B cell (primary cell): ENCODE measurements at regions of chr1 and their contacts with region 1.

Region 1: GRCh38 chr1:84143796-84144565 is at the start of gene PRKACB:
- DNase-seq: peak; percentile 65
- ATAC-seq: peak; percentile 86
- H3K4me3 ChIP-seq: peak within 1 kb of the TSS; percentile 46 to 85 (median 63)
- H3K4me3 Mint-ChIP-seq: peak within 1 kb of the TSS; percentile 91
- H3K27ac ChIP-seq: peak within 1 kb of the TSS; percentile 74 to 92
- H3K27ac Mint-ChIP-seq: peak within 1 kb of the TSS; percentile 95
- H3K4me1 ChIP-seq: peaks cover 2 to 38% of the 10 kb centered on the region in 2 donors
- H3K4me1 Mint-ChIP-seq: peaks cover 42% of the 10 kb centered on the region
- H3K27me3 ChIP-seq: no peaks in the 10 kb centered on the region
- H3K27me3 Mint-ChIP-seq: no peaks in the 10 kb centered on the region
- CTCF ChIP-seq: no peak
- total RNA-seq, gene PRKACB: 53.9 and 54.9 TPM in 2 replicates

Region 2: DNA sequence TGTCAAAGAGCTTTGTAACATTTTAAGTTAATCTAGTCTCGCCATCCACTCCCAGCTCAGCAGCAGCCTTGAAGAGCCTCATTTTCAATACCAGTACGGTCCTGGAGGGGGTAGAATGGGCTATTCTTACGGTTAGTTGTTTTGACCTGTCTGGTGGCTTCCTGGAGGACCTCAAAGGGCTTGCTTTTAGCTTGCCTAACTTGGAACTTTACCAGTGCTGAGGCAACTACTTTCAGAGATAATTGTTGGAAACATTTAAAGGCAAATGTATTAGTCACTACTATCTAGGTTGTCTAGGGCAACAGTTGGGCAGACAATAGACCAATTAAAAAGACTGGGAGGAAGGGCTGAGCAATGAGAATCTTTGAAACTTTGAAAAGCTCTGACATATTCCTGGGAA is 201.1 kb before region 1 on chr1:
- CTCF ChIA-PET with region 1: no interaction called
- POLR2A ChIA-PET with region 1: no interaction called
- intact Hi-C with region 1: no loop called
- DNase-seq: no peak
- ATAC-seq: no peak
- H3K4me3 ChIP-seq: no peak overlapping the region
- H3K4me3 Mint-ChIP-seq: no peak overlapping the region
- H3K27ac ChIP-seq: no peak overlapping the region
- H3K27ac Mint-ChIP-seq: no peak overlapping the region
- H3K4me1 ChIP-seq: no peaks in the 10 kb centered on the region
- H3K4me1 Mint-ChIP-seq: no peaks in the 10 kb centered on the region
- H3K27me3 ChIP-seq: no peaks in the 10 kb centered on the region
- H3K27me3 Mint-ChIP-seq: peaks cover 3% of the 10 kb centered on the region
- CTCF ChIP-seq: no peak

Region 3: DNA sequence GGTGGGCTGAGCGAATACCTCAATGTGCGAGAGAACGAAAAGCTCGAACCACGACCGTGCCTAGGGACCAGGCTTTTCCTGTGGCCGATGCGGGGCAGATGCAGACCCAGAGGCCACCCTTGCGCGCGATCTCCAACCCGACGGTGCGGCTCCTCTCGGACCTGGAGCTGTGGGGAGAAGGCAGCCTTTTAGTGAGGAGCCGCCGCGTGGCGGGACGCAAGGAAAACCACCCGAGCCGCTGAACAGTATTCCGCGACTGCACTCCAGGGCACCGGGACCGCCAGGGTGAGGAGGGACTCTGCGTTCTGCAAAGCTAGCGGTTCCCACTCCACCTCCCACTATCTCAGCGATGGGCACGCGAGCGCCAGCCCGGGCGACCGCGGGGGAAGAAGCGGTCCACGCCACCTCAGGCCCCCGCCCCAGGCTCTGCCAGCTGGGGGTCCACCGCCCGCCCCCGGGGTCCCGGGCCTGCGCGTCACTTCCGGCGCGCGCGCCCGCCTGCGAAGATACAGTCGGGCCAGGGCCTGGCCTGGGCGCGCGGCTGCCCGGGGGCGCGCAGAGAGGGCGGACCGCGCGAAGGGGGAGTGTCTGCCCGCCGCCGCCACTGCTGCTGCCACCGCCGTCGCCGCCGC is 66.4 kb before region 1 on chr1:
- CTCF ChIA-PET with region 1: interaction called, 3 read pairs
- POLR2A ChIA-PET with region 1: no interaction called
- intact Hi-C with region 1: loop called (anchors 5 kb)
- DNase-seq: peak; percentile 85
- ATAC-seq: peak; percentile 93
- H3K4me3 ChIP-seq: peak overlapping the region; percentile 41 to 86 (median 68)
- H3K4me3 Mint-ChIP-seq: peak overlapping the region; percentile 84
- H3K27ac ChIP-seq: peak overlapping the region; percentile 46 to 70
- H3K27ac Mint-ChIP-seq: peak overlapping the region; percentile 67
- H3K4me1 ChIP-seq: peaks cover 7 to 12% of the 10 kb centered on the region in 2 donors
- H3K4me1 Mint-ChIP-seq: peaks cover 13% of the 10 kb centered on the region
- H3K27me3 ChIP-seq: no peaks in the 10 kb centered on the region
- H3K27me3 Mint-ChIP-seq: no peaks in the 10 kb centered on the region
- CTCF ChIP-seq: no peak

Region 4: GRCh38 chr1:84181350-84182005 is 37.5 kb after region 1 on chr1:
- CTCF ChIA-PET with region 1: interaction called, 6 read pairs
- POLR2A ChIA-PET with region 1: no interaction called
- intact Hi-C with region 1: loop called (anchors 5 kb)
- DNase-seq: no peak
- ATAC-seq: no peak
- H3K4me3 ChIP-seq: no peak overlapping the region
- H3K4me3 Mint-ChIP-seq: no peak overlapping the region
- H3K27ac ChIP-seq: no peak overlapping the region
- H3K27ac Mint-ChIP-seq: no peak overlapping the region
- H3K4me1 ChIP-seq: no peaks in the 10 kb centered on the region
- H3K4me1 Mint-ChIP-seq: peaks cover 3% of the 10 kb centered on the region
- H3K27me3 ChIP-seq: no peaks in the 10 kb centered on the region
- H3K27me3 Mint-ChIP-seq: no peaks in the 10 kb centered on the region
- CTCF ChIP-seq: no peak

Region 5: GRCh38 chr1:84433258-84434080 is 289.5 kb after region 1 on chr1:
- CTCF ChIA-PET with region 1: interaction called, 285 read pairs
- POLR2A ChIA-PET with region 1: interaction called, 4 read pairs
- intact Hi-C with region 1: loop called (anchors 1 kb)
- DNase-seq: peak; percentile 78
- ATAC-seq: peak; percentile 34
- H3K4me3 ChIP-seq: peak overlapping the region in 4 of 5 experiments; percentile 19 to 43 (median 32)
- H3K4me3 Mint-ChIP-seq: peak overlapping the region; percentile 79
- H3K27ac ChIP-seq: peak overlapping the region in 1 of 2 donors; percentile 55
- H3K27ac Mint-ChIP-seq: peak overlapping the region; percentile 20
- H3K4me1 ChIP-seq: peaks cover 40 to 43% of the 10 kb centered on the region in 2 donors
- H3K4me1 Mint-ChIP-seq: peaks cover 9% of the 10 kb centered on the region
- H3K27me3 ChIP-seq: no peaks in the 10 kb centered on the region
- H3K27me3 Mint-ChIP-seq: no peaks in the 10 kb centered on the region
- CTCF ChIP-seq: peak; percentile 70

Region 6: GRCh38 chr1:84620720-84621313 is 476.8 kb after region 1 on chr1:
- CTCF ChIA-PET with region 1: interaction called, 12 read pairs
- POLR2A ChIA-PET with region 1: no interaction called
- intact Hi-C with region 1: loop called (anchors 1 kb)
- DNase-seq: peak; percentile 90
- ATAC-seq: peak; percentile 92
- H3K4me3 ChIP-seq: peak overlapping the region in 4 of 5 experiments; percentile 59 to 84 (median 72)
- H3K4me3 Mint-ChIP-seq: peak overlapping the region; percentile 96
- H3K27ac ChIP-seq: no peak overlapping the region
- H3K27ac Mint-ChIP-seq: peak overlapping the region; percentile 69
- H3K4me1 ChIP-seq: peaks cover 0 to 4% of the 10 kb centered on the region in 2 donors
- H3K4me1 Mint-ChIP-seq: peaks cover 6% of the 10 kb centered on the region
- H3K27me3 ChIP-seq: peaks cover 0 to 5% (median 0%) of the 10 kb centered on the region in 4 experiments
- H3K27me3 Mint-ChIP-seq: peaks cover 6% of the 10 kb centered on the region
- CTCF ChIP-seq: peak; percentile 100

Region 7: DNA sequence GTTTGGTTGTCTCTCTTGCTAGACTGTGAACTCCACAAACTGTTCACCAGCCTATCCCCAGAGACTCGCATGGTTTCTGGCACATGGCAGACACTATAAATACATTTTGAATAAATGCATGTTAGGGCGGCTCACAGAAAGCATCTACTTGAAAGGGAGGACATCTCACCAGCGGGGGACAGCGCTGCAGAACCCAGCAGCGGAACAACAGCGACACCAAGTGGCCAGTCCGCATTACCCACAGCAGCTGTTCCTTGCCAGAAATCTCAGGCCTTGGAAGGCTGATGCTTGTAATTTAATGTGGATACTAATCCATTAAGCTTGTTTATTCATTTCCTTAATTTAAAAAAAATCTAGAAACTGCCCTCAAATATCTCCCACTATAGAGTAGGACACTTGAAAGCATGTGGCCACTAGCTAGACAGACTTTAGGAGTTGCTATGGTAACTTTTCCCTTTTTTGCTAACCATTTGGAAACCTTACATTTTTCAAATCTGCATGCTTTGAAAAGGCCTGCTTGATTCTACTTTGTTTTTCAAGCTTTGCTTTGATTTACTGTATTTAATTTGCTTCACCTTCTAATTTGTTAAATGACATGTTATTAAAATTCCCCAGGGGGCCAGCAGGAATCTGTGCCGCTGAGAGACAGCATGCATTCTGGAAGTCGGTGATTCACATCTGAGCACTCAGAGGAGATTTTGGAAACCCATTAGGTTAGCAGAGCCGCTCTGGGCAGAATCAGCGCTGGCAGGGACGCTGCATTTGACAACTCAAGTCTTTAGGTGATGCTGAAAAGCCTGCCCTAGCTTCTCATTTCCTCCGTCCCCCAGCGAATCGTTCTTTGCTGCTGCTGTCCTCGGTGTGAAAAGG is 609.8 kb after region 1 on chr1:
- CTCF ChIA-PET with region 1: interaction called, 39 read pairs
- POLR2A ChIA-PET with region 1: no interaction called
- intact Hi-C with region 1: loop called (anchors 1 kb)
- DNase-seq: peak; percentile 76
- ATAC-seq: peak; percentile 81
- H3K4me3 ChIP-seq: no peak overlapping the region
- H3K4me3 Mint-ChIP-seq: no peak overlapping the region
- H3K27ac ChIP-seq: no peak overlapping the region
- H3K27ac Mint-ChIP-seq: no peak overlapping the region
- H3K4me1 ChIP-seq: peaks cover 1 to 3% of the 10 kb centered on the region in 2 donors
- H3K4me1 Mint-ChIP-seq: peaks cover 3% of the 10 kb centered on the region
- H3K27me3 ChIP-seq: peaks cover 0 to 16% (median 5%) of the 10 kb centered on the region in 4 experiments
- H3K27me3 Mint-ChIP-seq: peaks cover 30% of the 10 kb centered on the region
- CTCF ChIP-seq: peak; percentile 95